PC-3 (cell line): ENCODE measurements at regions of chr18 and their contacts with region 1.

Region 1: DNA sequence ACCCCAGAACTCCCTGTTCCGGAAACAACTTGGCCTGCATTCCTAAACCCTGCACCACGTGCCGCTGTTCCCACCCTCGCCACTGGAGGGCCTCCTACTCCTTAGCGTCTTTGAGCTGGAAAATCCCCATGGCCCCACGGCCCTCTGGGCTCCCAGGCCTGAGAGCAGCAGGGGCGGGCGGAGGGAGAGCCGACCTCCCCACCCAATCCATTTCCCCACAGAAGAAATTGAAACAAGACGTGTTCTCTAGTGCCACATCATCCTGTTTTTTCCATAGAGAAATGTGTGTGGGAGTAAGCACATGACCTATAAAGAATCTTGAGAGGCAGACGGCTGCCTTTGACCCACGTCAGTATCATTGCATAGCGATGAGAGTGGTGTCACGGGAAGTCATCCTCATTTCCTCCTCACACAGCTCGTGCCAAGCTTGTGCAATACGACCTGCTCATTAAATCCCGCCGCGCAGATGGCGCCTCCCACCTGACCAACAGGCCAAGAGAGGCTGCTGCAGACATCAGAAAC is 79.2 kb downstream of the LAMA1 start:
- DNase-seq: peak; percentile 77
- ATAC-seq: peak; percentile 93
- H3K4me3 ChIP-seq: peak overlapping the region; percentile 56
- H3K27ac ChIP-seq: 0 out of 2 replicates have a peak overlapping the region, but pooled peaks have one; percentile 2
- H3K4me1 ChIP-seq: peaks cover 10% of the 10 kb centered on the region
- H3K27me3 ChIP-seq: peaks cover 50% of the 10 kb centered on the region
- CTCF ChIP-seq: peak; percentile 88

Region 2: GRCh38 chr18:7177116-7177744 is 138.8 kb after region 1 on chr18:
- CTCF ChIA-PET with region 1: interaction called, 8 read pairs
- POLR2A ChIA-PET with region 1: no interaction called
- intact Hi-C with region 1: loop called (anchors 1 kb)
- DNase-seq: peak; percentile 66
- ATAC-seq: peak; percentile 99
- H3K4me3 ChIP-seq: no peak overlapping the region
- H3K27ac ChIP-seq: no peak overlapping the region
- H3K4me1 ChIP-seq: no peaks in the 10 kb centered on the region
- H3K27me3 ChIP-seq: peaks cover 47% of the 10 kb centered on the region
- CTCF ChIP-seq: peak; percentile 83